CD4-positive, alpha-beta memory T cell (primary cell): ENCODE measurements at regions of chr11 and their contacts with region 1.

Region 1: GRCh38 chr11:12281571-12282478 is 95.5 kb upstream of the PARVA start:
- DNase-seq: peak; percentile 63 to 75 (median 71)
- H3K4me3 ChIP-seq: no peak overlapping the region
- H3K4me3 Mint-ChIP-seq: no peak overlapping the region
- H3K27ac ChIP-seq: no peak overlapping the region
- H3K27ac Mint-ChIP-seq: no peak overlapping the region
- H3K4me1 ChIP-seq: no peaks in the 10 kb centered on the region
- H3K4me1 Mint-ChIP-seq: no peaks in the 10 kb centered on the region
- H3K27me3 ChIP-seq: no peaks in the 10 kb centered on the region
- H3K27me3 Mint-ChIP-seq: no peaks in the 10 kb centered on the region

Region 2: DNA sequence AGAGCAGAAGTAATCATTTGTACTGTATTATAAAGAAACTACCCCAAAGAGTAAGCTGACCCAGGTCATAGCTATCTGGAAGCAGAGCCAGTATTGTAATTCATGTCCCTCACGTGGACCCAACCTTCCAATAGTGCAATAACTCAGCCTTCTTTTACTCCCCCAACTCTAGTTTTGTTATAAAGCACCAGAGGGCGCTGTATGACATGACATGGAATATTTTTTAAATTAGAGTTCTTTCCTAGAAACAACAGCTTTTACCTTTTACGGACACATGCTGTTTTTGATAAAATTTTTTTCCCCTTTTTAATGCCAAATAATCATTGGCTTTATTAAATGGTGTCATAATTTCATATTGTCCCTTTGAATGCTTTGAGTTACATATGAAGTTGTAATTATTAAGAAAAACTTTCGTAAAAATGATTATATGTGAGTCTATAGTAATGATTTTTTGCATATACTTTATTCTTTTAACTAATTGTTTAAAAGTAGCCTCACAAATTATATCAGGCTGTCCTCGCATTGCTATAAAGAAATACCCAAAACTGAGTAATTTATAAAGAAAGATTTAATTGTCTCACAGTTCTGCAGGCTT is 350.3 kb before region 1 on chr11:
- CTCF ChIA-PET with region 1: interaction called, 11 read pairs
- POLR2A ChIA-PET with region 1: no interaction called
- intact Hi-C with region 1: loop called (anchors 5 kb)
- DNase-seq: peak; percentile 26 to 42 (median 38)
- H3K4me3 ChIP-seq: no peak overlapping the region
- H3K4me3 Mint-ChIP-seq: no peak overlapping the region
- H3K27ac ChIP-seq: no peak overlapping the region
- H3K27ac Mint-ChIP-seq: no peak overlapping the region
- H3K4me1 ChIP-seq: no peaks in the 10 kb centered on the region
- H3K4me1 Mint-ChIP-seq: peaks cover 4 to 9% (median 7%) of the 10 kb centered on the region in 4 donors
- H3K27me3 ChIP-seq: no peaks in the 10 kb centered on the region
- H3K27me3 Mint-ChIP-seq: no peaks in the 10 kb centered on the region

Region 3: DNA sequence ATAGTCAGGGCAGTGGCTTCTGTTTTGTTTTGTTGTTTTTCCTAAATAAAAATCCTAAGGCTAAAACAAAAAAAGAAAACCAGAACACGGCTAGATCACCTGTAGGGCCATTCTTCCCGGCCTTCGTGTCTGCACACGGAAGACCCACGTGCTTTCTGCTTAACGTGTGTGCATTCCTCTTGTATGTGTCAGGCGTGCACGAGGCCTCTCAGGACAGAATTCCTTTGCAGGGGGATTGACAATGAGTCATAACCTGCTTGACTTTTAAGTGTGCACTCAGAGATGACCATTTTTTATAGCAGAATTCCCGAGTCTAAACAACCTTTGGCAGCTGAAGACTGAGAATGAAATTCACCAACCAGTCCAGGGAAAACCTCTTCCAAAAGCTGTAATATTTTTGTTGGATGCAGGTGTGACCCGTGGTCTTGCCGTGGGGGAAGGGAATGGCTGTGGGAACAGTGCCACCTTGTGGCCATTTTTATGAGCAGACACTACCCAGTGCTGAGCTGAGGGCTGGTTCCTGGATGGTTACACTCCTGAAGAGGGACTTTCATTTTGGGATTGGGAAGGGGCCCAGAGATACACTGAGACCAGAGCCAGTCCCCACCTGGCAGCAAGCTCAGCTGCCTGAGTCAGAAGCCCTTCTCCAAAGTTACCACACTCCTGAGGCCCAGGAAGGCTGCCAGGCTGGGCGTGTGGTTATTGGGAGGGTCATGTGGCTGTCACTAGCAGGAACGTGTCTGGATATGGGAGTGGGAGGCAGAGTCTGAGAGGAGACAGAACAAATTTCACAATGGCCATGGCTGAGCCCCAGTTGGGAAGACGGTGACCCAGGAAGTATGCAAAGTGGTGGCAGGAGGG is 237.6 kb before region 1 on chr11:
- CTCF ChIA-PET with region 1: interaction called, 540 read pairs
- POLR2A ChIA-PET with region 1: interaction called, 7 read pairs
- intact Hi-C with region 1: loop called (anchors 1 kb)
- DNase-seq: peak in 4 of 5 donors; percentile 49 to 60 (median 50)
- H3K4me3 ChIP-seq: no peak overlapping the region
- H3K4me3 Mint-ChIP-seq: no peak overlapping the region
- H3K27ac ChIP-seq: no peak overlapping the region
- H3K27ac Mint-ChIP-seq: no peak overlapping the region
- H3K4me1 ChIP-seq: no peaks in the 10 kb centered on the region
- H3K4me1 Mint-ChIP-seq: peaks cover 2 to 5% (median 3%) of the 10 kb centered on the region in 4 donors
- H3K27me3 ChIP-seq: no peaks in the 10 kb centered on the region
- H3K27me3 Mint-ChIP-seq: no peaks in the 10 kb centered on the region

Region 4: DNA sequence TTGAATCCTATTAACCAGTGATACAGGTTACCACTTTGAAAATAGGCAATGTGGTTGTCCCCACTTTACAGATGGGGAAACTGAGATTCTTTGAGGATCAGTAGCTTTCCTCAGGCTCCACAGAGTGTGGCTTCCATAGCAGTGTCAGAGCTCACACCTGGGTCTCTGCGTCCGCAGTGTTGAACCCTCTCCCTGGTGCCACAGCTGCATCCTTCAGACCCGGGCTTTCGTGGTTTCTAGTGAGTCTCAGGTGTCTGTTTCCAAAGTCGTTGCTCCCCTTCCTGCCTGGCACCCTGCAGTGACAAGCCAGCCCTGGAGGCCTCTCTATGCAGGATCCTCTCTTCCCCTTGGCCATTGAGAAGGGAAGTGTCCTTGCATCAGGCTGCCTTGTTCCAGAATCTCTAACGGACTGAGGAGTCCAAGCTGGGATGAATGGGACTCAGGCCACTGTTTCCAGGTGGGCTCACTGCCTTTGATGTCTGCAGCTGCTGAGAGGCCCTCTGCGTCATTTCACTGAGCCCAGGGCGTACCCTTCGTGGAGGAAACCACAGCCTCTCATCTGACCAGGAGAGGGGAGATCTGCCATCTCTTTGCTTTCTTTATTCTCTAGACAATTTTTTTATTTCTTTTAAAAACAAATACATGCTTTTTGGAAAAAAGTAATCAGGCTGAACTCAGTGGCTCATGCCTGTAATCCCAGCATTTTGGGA is 219.8 kb before region 1 on chr11:
- CTCF ChIA-PET with region 1: interaction called, 540 read pairs
- POLR2A ChIA-PET with region 1: no interaction called
- intact Hi-C with region 1: no loop called
- DNase-seq: no peak
- H3K4me3 ChIP-seq: no peak overlapping the region
- H3K4me3 Mint-ChIP-seq: peak overlapping the region in 1 of 8 donors; percentile 46
- H3K27ac ChIP-seq: no peak overlapping the region
- H3K27ac Mint-ChIP-seq: peak overlapping the region in 1 of 7 donors; percentile 42
- H3K4me1 ChIP-seq: no peaks in the 10 kb centered on the region
- H3K4me1 Mint-ChIP-seq: peaks cover 0 to 5% (median 1%) of the 10 kb centered on the region in 4 donors
- H3K27me3 ChIP-seq: no peaks in the 10 kb centered on the region
- H3K27me3 Mint-ChIP-seq: peaks cover 0 to 2% of the 10 kb centered on the region in 2 donors

Region 5: DNA sequence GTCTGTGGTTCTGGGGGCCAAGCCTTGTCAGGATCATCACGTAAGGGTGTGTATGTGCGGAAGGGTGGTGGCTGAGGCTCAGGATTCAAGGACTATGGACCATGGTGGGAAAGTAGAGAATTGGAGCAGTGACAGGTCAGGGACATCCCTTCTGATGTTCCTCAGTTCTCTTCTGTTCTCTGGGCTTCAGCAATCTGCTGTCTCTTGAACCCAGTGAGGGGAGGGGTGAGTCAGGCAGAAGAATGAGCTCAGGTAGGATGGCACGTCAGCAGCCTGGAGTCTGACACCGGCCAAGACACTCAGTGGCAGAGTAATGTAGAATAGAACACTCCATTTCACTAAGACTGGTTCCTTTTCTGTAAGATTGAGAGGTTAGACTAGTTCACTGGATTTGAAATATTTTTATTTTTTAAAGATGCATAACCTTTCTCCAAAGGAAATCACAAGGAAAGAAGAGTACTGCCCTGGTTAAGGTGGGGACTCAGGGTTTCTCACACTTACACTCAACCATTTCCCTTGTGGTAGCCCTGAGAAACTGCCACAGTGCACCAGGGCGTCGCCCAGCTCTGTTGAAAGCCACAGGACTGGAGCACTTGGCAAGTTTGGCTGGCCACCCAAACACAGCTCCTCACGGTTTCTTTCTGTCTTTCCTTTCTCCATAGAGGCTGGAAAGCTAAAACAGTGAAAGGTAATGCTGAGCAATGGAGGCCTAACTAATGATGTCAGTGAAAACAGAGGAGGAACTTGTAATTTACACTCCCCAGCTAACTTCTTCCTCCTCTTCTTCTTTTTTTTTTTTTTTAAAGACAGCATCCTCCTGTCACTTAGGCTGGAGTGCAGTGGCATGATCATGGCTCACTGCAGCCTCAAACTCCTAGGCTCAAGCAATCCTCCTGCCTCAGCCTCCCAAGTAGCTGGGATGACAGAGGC is 194.5 kb before region 1 on chr11:
- CTCF ChIA-PET with region 1: interaction called, 34 read pairs
- POLR2A ChIA-PET with region 1: no interaction called
- intact Hi-C with region 1: no loop called
- DNase-seq: peak; percentile 39 to 63 (median 52)
- H3K4me3 ChIP-seq: peak overlapping the region; percentile 6 to 26
- H3K4me3 Mint-ChIP-seq: peak overlapping the region; percentile 53 to 81 (median 72)
- H3K27ac ChIP-seq: no peak overlapping the region
- H3K27ac Mint-ChIP-seq: peak overlapping the region; percentile 67 to 94 (median 90)
- H3K4me1 ChIP-seq: peaks cover 62% of the 10 kb centered on the region
- H3K4me1 Mint-ChIP-seq: peaks cover 59 to 83% (median 65%) of the 10 kb centered on the region in 4 donors
- H3K27me3 ChIP-seq: no peaks in the 10 kb centered on the region
- H3K27me3 Mint-ChIP-seq: no peaks in the 10 kb centered on the region

Region 6: GRCh38 chr11:12263141-12263693 is 18.6 kb before region 1 on chr11:
- CTCF ChIA-PET with region 1: interaction called, 16 read pairs
- POLR2A ChIA-PET with region 1: no interaction called
- intact Hi-C with region 1: no loop called
- DNase-seq: no peak
- H3K4me3 ChIP-seq: no peak overlapping the region
- H3K4me3 Mint-ChIP-seq: no peak overlapping the region
- H3K27ac ChIP-seq: no peak overlapping the region
- H3K27ac Mint-ChIP-seq: no peak overlapping the region
- H3K4me1 ChIP-seq: no peaks in the 10 kb centered on the region
- H3K4me1 Mint-ChIP-seq: no peaks in the 10 kb centered on the region
- H3K27me3 ChIP-seq: no peaks in the 10 kb centered on the region
- H3K27me3 Mint-ChIP-seq: no peaks in the 10 kb centered on the region

Region 7: DNA sequence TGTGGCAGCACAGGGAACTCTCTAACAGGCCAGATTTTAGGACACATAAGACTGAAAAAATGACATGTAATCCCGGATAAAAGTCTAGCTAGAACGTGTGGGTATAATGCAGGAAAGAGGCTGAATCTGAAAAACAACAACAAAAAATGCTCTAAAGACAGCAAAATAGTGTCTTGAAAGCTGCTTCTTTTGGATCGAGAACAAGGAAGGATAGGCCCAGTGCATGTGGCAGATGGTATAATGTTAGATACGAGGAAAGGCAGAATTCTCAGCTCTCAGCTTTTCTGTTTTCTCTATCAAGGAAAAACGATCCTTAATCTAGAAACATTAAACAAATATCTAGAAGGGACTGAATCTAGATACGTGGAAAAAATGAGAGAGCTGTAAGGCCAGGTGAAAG is 61.7 kb after region 1 on chr11:
- CTCF ChIA-PET with region 1: no interaction called
- POLR2A ChIA-PET with region 1: no interaction called
- intact Hi-C with region 1: no loop called
- DNase-seq: no peak
- H3K4me3 ChIP-seq: no peak overlapping the region
- H3K4me3 Mint-ChIP-seq: no peak overlapping the region
- H3K27ac ChIP-seq: no peak overlapping the region
- H3K27ac Mint-ChIP-seq: no peak overlapping the region
- H3K4me1 ChIP-seq: no peaks in the 10 kb centered on the region
- H3K4me1 Mint-ChIP-seq: no peaks in the 10 kb centered on the region
- H3K27me3 ChIP-seq: no peaks in the 10 kb centered on the region
- H3K27me3 Mint-ChIP-seq: peaks cover 0 to 3% of the 10 kb centered on the region in 2 donors